Calu3 (cell line): ENCODE measurements at regions of chr10 and their contacts with region 1.

Region 1: GRCh38 chr10:33341637-33342036 is 7.2 kb upstream of the NRP1 start:
- DNase-seq: no peak
- H3K4me3 Mint-ChIP-seq: no peak overlapping the region
- H3K27ac Mint-ChIP-seq: no peak overlapping the region
- H3K4me1 Mint-ChIP-seq: peaks cover 31% of the 10 kb centered on the region
- H3K27me3 Mint-ChIP-seq: no peaks in the 10 kb centered on the region
- CTCF ChIP-seq: no peak

Region 2: GRCh38 chr10:33381451-33382242 is 40.0 kb after region 1 on chr10:
- CTCF ChIA-PET with region 1: no interaction called
- intact Hi-C with region 1: loop called (anchors 2 kb)
- DNase-seq: no peak
- H3K4me3 Mint-ChIP-seq: no peak overlapping the region
- H3K27ac Mint-ChIP-seq: no peak overlapping the region
- H3K4me1 Mint-ChIP-seq: peaks cover 22% of the 10 kb centered on the region
- H3K27me3 Mint-ChIP-seq: no peaks in the 10 kb centered on the region
- CTCF ChIP-seq: no peak

Region 3: GRCh38 chr10:33772370-33773252 is 431.0 kb after region 1 on chr10:
- CTCF ChIA-PET with region 1: no interaction called
- intact Hi-C with region 1: no loop called
- DNase-seq: no peak
- H3K4me3 Mint-ChIP-seq: no peak overlapping the region
- H3K27ac Mint-ChIP-seq: no peak overlapping the region
- H3K4me1 Mint-ChIP-seq: no peaks in the 10 kb centered on the region
- H3K27me3 Mint-ChIP-seq: no peaks in the 10 kb centered on the region
- CTCF ChIP-seq: no peak